ENCODE measurements at regions of chr9 and their contacts with region 1.

Region 1: GRCh38 chr9:613771-614347 is 227.6 kb upstream of the DMRT1 start:
- DNase-seq: peak; percentile 22
- H3K4me3 Mint-ChIP-seq: no peak overlapping the region
- H3K27ac Mint-ChIP-seq: no peak overlapping the region
- H3K4me1 Mint-ChIP-seq: peaks cover 7% of the 10 kb centered on the region
- H3K27me3 Mint-ChIP-seq: peaks cover 2% of the 10 kb centered on the region

Region 2: DNA sequence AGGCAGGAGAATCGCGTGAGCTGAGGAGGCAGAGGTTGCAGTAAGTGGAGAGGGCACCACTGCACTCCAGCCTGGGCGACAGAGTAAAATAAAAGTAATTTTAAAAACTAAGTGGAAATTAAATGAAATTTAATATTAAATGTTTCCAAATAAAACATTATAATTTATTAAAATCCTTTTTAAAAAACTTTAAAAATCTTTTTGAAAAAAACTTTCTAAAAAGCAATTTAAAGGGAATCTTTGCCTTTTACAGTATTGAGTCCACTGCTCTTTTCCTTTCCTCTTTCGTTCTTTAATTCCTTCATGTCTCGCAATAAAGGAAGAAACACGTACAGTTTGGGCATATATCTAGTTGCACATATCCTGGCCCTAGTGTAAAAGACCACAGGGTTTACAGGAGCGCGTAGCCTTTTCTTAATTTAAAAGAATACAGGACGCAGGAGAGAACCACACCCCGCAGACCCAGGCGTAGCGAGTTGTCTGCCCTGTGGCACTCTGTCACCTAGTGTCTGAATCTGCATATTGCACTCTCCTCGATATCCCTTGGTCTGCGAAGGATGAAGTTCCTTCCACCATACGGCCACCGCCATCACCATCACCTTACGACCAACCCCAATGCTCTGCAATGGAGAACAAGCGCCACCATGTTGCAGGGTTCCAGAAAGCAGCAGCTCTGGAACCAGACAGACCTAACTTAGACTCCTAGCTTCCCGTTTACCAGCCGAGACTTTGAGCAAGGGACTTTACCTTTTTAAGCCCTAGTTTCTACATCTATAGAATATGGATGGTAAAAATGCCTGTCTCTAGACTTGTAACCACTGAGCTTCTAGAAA is 150.0 kb after region 1 on chr9:
- intact Hi-C with region 1: loop called (anchors 1 kb)
- DNase-seq: peak; percentile 51
- H3K4me3 Mint-ChIP-seq: no peak overlapping the region
- H3K27ac Mint-ChIP-seq: no peak overlapping the region
- H3K4me1 Mint-ChIP-seq: peaks cover 24% of the 10 kb centered on the region
- H3K27me3 Mint-ChIP-seq: peaks cover 24% of the 10 kb centered on the region

Region 3: GRCh38 chr9:806285-807156 is 192.7 kb after region 1 on chr9:
- intact Hi-C with region 1: loop called (anchors 1 kb)
- DNase-seq: no peak
- H3K4me3 Mint-ChIP-seq: no peak overlapping the region
- H3K27ac Mint-ChIP-seq: no peak overlapping the region
- H3K4me1 Mint-ChIP-seq: no peaks in the 10 kb centered on the region
- H3K27me3 Mint-ChIP-seq: peaks cover 21% of the 10 kb centered on the region

Region 4: GRCh38 chr9:1009101-1009707 is 395.3 kb after region 1 on chr9:
- intact Hi-C with region 1: loop called (anchors 5 kb)
- DNase-seq: peak; percentile 67
- H3K4me3 Mint-ChIP-seq: no peak overlapping the region
- H3K27ac Mint-ChIP-seq: no peak overlapping the region
- H3K4me1 Mint-ChIP-seq: peaks cover 11% of the 10 kb centered on the region
- H3K27me3 Mint-ChIP-seq: peaks cover 10% of the 10 kb centered on the region